Mammary epithelial cell (primary cell): ENCODE measurements at regions of chr1 and their contacts with region 1.

Region 1: GRCh38 chr1:116194568-116195474 is 83.6 kb downstream of the MAB21L3 start:
- DNase-seq: peak; percentile 62
- H3K4me3 ChIP-seq: no peak overlapping the region
- H3K27ac ChIP-seq: no peak overlapping the region
- H3K4me1 ChIP-seq: peaks cover 7% of the 10 kb centered on the region
- H3K27me3 ChIP-seq: no peaks in the 10 kb centered on the region
- CTCF ChIP-seq: no peak

Region 2: DNA sequence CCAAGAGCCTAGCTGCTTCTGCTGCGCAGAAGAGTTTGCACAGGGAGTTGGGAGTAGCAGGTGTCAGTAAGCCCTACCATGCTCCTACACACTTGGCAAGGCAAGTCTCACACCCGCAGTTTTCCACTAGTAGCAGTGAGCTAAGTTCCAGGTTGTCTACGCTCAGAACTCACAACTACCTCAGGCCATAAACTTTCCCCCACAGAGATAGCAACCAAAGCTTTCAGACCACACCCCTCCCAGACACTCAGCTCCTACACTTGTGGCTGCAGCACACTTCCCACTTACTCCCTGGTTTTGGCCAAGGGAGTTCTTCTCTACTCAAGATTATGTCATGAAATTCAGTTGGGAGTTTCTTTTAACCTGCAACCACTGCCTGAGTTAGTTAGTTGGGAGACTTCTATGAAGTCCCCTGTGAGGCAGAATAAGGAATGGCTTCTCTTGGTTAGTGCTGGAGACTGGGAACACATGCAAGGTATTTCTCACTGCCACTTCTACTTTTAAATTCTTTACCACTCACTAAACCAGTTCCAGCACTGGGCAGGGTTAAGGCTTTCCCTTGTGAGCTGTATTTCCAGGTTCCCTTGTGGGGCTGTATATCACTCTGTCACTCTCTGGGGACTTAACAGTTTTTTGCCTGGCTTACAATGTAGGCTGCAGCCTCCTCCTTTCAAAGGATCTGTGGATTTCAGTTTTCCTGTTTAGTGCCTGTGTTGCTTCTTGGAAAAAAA is 101.9 kb before region 1 on chr1:
- CTCF ChIA-PET with region 1: no interaction called
- dilution Hi-C with region 1: loop called (anchors 5 kb)
- in situ Hi-C with region 1: no loop called
- intact Hi-C with region 1: no loop called
- DNase-seq: no peak
- H3K4me3 ChIP-seq: no peak overlapping the region
- H3K27ac ChIP-seq: no peak overlapping the region
- H3K4me1 ChIP-seq: no peaks in the 10 kb centered on the region
- H3K27me3 ChIP-seq: no peaks in the 10 kb centered on the region
- CTCF ChIP-seq: no peak

Region 3: GRCh38 chr1:116133696-116134650 is 60.8 kb before region 1 on chr1:
- CTCF ChIA-PET with region 1: no interaction called
- dilution Hi-C with region 1: loop called (anchors 5 kb)
- in situ Hi-C with region 1: no loop called
- intact Hi-C with region 1: no loop called
- DNase-seq: no peak
- H3K4me3 ChIP-seq: no peak overlapping the region
- H3K27ac ChIP-seq: no peak overlapping the region
- H3K4me1 ChIP-seq: peaks cover 14% of the 10 kb centered on the region
- H3K27me3 ChIP-seq: no peaks in the 10 kb centered on the region
- CTCF ChIP-seq: no peak

Region 4: GRCh38 chr1:116232989-116233514 is 38.2 kb after region 1 on chr1:
- CTCF ChIA-PET with region 1: no interaction called
- dilution Hi-C with region 1: no loop called
- in situ Hi-C with region 1: no loop called
- intact Hi-C with region 1: no loop called
- DNase-seq: no peak
- H3K4me3 ChIP-seq: no peak overlapping the region
- H3K27ac ChIP-seq: no peak overlapping the region
- H3K4me1 ChIP-seq: no peaks in the 10 kb centered on the region
- H3K27me3 ChIP-seq: no peaks in the 10 kb centered on the region
- CTCF ChIP-seq: peak in 1 of 2 donors; percentile 23

Region 5: DNA sequence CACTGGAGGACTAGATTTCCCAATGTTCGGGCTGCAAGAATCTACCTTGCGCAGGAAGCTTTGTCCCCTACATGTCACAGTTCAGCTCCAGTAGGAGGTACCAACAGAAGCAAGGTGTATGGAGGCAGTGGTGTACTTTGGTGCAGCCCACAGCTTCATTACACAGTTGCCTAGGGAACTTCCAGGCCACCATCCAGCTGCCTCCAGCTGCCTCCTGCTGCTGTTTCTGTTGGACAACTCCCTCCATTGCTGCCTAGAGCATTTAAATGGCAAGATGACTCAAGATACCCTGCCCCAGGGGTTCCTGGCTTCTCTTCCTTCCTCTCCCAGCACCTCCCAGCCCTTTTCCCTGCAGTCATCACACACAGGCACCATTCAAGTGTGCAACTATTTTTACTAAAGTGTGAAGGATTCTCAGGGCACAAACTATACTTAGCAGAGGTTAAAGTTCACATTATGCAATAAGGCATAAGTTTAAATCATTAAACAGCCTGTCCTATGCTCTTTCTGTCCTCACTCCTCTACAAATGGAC is 139.3 kb after region 1 on chr1:
- CTCF ChIA-PET with region 1: no interaction called
- dilution Hi-C with region 1: no loop called
- in situ Hi-C with region 1: no loop called
- intact Hi-C with region 1: no loop called
- DNase-seq: peak; percentile 72
- H3K4me3 ChIP-seq: no peak overlapping the region
- H3K27ac ChIP-seq: no peak overlapping the region
- H3K4me1 ChIP-seq: peaks cover 8% of the 10 kb centered on the region
- H3K27me3 ChIP-seq: no peaks in the 10 kb centered on the region
- CTCF ChIP-seq: no peak